Endothelial cell of umbilical vein (primary cell): ENCODE measurements at regions of chr1 and their contacts with region 1.

Region 1: DNA sequence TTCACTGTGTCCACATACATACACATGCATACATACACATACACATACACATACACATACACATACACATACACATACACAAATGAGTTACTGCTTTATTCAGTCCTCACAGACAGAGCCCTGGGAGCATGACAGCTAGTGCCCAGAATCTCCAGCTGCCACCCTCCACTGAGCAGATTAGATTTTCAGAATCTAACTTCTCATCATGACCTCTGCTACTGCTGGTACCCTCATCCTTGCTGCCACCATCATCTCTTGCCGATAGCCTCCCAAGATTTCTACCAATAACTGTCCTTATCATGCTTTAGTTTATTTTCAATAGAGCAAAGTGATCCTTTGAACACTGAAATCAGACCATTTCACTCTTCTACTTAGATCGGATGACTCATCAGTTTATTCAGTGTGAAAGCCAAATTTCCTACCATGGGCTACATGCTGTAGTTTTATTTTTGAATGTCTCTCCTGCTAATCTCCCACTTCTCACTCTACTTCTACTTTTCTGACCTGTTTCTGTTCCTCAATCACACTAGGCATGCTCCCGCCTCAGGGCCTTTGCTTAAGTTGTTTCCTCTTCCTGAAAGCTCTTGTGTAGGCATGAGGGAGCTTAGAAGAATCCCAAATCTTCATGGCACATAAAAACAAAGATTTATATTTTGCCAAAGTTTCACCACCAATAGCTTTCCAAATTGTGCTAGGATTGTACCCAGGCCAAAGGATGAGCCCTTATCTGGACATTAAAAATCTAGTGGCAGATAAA is 43.0 kb downstream of the ATP6V1G3 start:
- DNase-seq: peak; percentile 47
- H3K4me3 ChIP-seq: no peak overlapping the region
- H3K27ac ChIP-seq: peak overlapping the region; percentile 34
- H3K4me1 ChIP-seq: peaks cover 14% of the 10 kb centered on the region
- H3K27me3 ChIP-seq: no peaks in the 10 kb centered on the region
- CTCF ChIP-seq: no peak
- POLR2A ChIP-seq: no peak

Region 2: GRCh38 chr1:198529414-198529813 is 31.9 kb after region 1 on chr1:
- CTCF ChIA-PET with region 1: no interaction called
- POLR2A ChIA-PET with region 1: no interaction called
- dilution Hi-C with region 1: no loop called
- intact Hi-C with region 1: loop called (anchors 2 kb)
- DNase-seq: peak; percentile 74
- H3K4me3 ChIP-seq: no peak overlapping the region
- H3K27ac ChIP-seq: no peak overlapping the region
- H3K4me1 ChIP-seq: peaks cover 22% of the 10 kb centered on the region
- H3K27me3 ChIP-seq: no peaks in the 10 kb centered on the region
- CTCF ChIP-seq: no peak
- POLR2A ChIP-seq: no peak

Region 3: GRCh38 chr1:198669023-198669698 is 171.6 kb after region 1 on chr1:
- CTCF ChIA-PET with region 1: no interaction called
- POLR2A ChIA-PET with region 1: no interaction called
- dilution Hi-C with region 1: no loop called
- intact Hi-C with region 1: loop called (anchors 5 kb)
- DNase-seq: peak; percentile 78
- H3K4me3 ChIP-seq: no peak overlapping the region
- H3K27ac ChIP-seq: peak overlapping the region; percentile 80
- H3K4me1 ChIP-seq: peaks cover 16% of the 10 kb centered on the region
- H3K27me3 ChIP-seq: no peaks in the 10 kb centered on the region
- CTCF ChIP-seq: no peak
- POLR2A ChIP-seq: peak; percentile 68

Region 4: GRCh38 chr1:199046618-199047017 is 549.1 kb after region 1 on chr1:
- CTCF ChIA-PET with region 1: no interaction called
- POLR2A ChIA-PET with region 1: no interaction called
- dilution Hi-C with region 1: no loop called
- intact Hi-C with region 1: no loop called
- DNase-seq: no peak
- H3K4me3 ChIP-seq: no peak overlapping the region
- H3K27ac ChIP-seq: no peak overlapping the region
- H3K4me1 ChIP-seq: no peaks in the 10 kb centered on the region
- H3K27me3 ChIP-seq: no peaks in the 10 kb centered on the region
- CTCF ChIP-seq: no peak
- POLR2A ChIP-seq: no peak